Activated B cell treated with CpG ODN at 0.5 μM for 24 hours (primary cell): ENCODE measurements at regions of chr4 and their contacts with region 1.

Region 1: DNA sequence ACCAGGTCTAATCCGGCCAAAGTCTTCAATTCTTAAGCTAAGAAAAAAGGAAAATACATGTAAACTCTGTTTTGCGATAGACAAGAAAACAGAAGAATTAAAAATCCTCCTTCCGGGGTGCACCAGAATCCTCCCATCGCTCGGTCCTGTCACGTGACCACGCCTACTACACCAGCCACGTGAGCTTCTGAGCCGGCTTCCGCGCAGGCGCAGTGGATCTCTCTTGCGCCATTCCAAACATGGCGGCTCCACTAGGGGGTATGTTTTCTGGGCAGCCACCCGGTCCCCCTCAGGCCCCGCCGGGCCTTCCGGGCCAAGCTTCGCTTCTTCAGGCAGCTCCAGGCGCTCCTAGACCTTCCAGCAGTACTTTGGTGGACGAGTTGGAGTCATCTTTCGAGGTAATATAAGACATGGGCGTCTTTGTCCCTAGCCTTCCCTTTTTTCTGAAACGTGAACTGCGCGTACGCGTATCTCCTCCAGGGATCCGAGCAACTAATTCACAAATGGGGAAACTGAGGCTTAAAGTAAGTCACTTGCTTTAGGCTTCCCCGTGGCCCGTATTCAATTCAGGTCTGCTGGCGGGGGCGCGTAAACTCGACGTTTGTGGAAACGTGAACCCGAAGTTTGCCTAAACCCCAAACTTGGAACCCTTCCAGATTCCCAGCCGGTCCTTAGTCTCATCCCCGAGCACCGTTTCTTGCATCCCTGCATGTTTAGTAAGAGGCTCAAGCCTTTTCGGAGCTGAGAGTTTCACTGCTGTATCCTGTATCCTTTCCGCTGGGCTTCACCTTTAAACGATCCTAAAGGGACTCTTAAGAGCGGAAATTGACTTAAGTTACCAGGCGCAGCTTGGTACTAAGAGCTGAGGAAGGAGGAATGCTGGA is at the start of gene MED28:
- DNase-seq: peak; percentile 89
- ATAC-seq: peak; percentile 86
- H3K4me3 Mint-ChIP-seq: peak within 1 kb of the TSS; percentile 97
- H3K27ac Mint-ChIP-seq: peak within 1 kb of the TSS; percentile 95
- H3K4me1 Mint-ChIP-seq: peaks cover 45% of the 10 kb centered on the region
- H3K27me3 Mint-ChIP-seq: no peaks in the 10 kb centered on the region
- CTCF ChIP-seq: no peak
- total RNA-seq, gene MED28: 71.9 and 74.6 TPM in 2 replicates

Region 2: DNA sequence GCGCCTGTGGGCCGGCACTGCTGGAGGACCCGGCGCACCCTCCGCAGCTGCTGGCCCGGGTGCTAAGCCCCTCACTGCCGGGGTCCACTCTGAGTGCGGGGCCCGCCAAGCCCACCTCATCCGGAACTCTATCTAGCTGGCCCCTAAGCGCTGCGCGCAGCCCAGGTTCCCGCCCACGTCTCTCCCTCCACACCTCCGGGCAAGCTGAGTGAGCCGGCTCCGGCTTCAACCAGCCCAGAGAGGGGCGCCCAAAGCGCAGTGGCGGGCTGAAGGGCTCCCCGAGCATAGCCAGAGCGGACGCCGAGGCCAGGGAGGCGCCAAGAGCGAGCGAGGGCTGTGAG is 177.9 kb before region 1 on chr4:
- CTCF ChIA-PET with region 1: no interaction called
- POLR2A ChIA-PET with region 1: no interaction called
- intact Hi-C with region 1: no loop called
- DNase-seq: no peak
- ATAC-seq: no peak
- H3K4me3 Mint-ChIP-seq: no peak overlapping the region
- H3K27ac Mint-ChIP-seq: no peak overlapping the region
- H3K4me1 Mint-ChIP-seq: no peaks in the 10 kb centered on the region
- H3K27me3 Mint-ChIP-seq: no peaks in the 10 kb centered on the region
- CTCF ChIP-seq: no peak

Region 3: DNA sequence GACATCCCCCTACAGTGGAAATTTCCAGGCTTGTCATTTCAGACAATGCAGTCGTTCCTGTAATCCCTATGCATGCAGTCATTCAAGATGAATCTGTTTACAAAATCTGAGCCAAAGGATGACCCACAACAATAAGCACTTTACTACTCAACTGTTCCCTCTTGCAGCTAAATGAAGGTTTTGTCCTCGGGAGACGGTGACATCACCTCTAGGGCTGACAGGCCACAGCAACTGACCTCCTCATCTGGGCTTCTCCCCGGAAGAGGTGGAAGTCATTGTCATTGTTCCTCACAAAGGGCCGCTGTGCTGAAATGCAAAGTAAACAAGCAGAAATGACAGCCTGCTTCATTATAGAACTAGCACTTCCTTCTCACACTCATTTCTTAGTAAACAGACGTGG is 70.5 kb before region 1 on chr4:
- CTCF ChIA-PET with region 1: interaction called, 9 read pairs
- POLR2A ChIA-PET with region 1: interaction called, 17 read pairs
- intact Hi-C with region 1: loop called (anchors 1 kb)
- DNase-seq: no peak
- ATAC-seq: no peak
- H3K4me3 Mint-ChIP-seq: no peak overlapping the region
- H3K27ac Mint-ChIP-seq: no peak overlapping the region
- H3K4me1 Mint-ChIP-seq: peaks cover 3% of the 10 kb centered on the region
- H3K27me3 Mint-ChIP-seq: peaks cover 9% of the 10 kb centered on the region
- CTCF ChIP-seq: no peak

Region 4: DNA sequence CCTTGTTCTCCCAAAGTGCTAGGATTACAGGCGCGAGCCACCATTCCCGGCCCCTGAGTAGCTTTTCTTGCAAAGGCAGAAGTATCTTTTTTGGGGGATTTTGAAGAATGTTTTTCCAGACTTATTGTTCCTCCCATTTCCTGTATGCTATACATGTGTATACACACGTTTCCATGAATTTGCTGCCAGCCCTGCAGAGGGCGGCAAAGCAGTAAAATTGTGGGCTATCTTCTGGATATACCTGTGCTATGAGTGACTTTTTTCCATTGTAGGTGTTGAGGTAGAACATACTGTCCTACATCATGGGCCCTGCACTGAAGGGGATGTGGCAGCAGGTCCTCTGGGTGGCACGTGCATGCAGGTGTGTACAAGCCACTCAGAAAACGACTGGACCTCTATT is 17.1 kb before region 1 on chr4:
- CTCF ChIA-PET with region 1: interaction called, 5 read pairs
- POLR2A ChIA-PET with region 1: interaction called, 42 read pairs
- intact Hi-C with region 1: loop called (anchors 1 kb)
- DNase-seq: no peak
- ATAC-seq: no peak
- H3K4me3 Mint-ChIP-seq: no peak overlapping the region
- H3K27ac Mint-ChIP-seq: no peak overlapping the region
- H3K4me1 Mint-ChIP-seq: peaks cover 32% of the 10 kb centered on the region
- H3K27me3 Mint-ChIP-seq: no peaks in the 10 kb centered on the region
- CTCF ChIP-seq: no peak

Region 5: GRCh38 chr4:17630228-17630627 is 15.6 kb after region 1 on chr4:
- CTCF ChIA-PET with region 1: no interaction called
- POLR2A ChIA-PET with region 1: no interaction called
- intact Hi-C with region 1: no loop called
- DNase-seq: no peak
- ATAC-seq: no peak
- H3K4me3 Mint-ChIP-seq: no peak overlapping the region
- H3K27ac Mint-ChIP-seq: no peak overlapping the region
- H3K4me1 Mint-ChIP-seq: no peaks in the 10 kb centered on the region
- H3K27me3 Mint-ChIP-seq: no peaks in the 10 kb centered on the region
- CTCF ChIP-seq: no peak

Region 6: DNA sequence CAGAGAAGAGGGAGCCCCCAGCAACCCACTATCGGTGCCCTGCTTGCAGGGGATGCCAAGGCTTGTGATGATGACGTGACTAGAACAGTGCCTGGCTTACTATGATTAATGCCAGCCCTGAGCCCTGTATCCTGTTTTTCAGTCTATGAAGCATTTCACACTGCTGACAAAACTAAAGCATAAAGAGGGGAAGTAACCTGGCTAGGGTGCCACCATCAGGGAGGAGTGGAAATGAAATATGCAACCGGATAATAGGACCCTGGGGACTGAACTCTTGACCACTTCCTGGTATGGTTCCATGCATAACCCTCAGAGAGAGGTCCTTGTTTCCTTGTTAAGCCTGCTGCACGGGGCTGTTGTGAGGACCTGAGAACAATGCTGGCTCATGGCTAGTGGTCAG is 50.1 kb after region 1 on chr4:
- CTCF ChIA-PET with region 1: no interaction called
- POLR2A ChIA-PET with region 1: interaction called, 4 read pairs
- intact Hi-C with region 1: loop called (anchors 2 kb)
- DNase-seq: no peak
- ATAC-seq: peak; percentile 89
- H3K4me3 Mint-ChIP-seq: peak overlapping the region; percentile 25
- H3K27ac Mint-ChIP-seq: peak overlapping the region; percentile 12
- H3K4me1 Mint-ChIP-seq: peaks cover 40% of the 10 kb centered on the region
- H3K27me3 Mint-ChIP-seq: peaks cover 4% of the 10 kb centered on the region
- CTCF ChIP-seq: no peak

Region 7: GRCh38 chr4:17810260-17811077 is 195.8 kb after region 1 on chr4 and contains the starts of genes DCAF16 and NCAPG:
- CTCF ChIA-PET with region 1: interaction called, 3 read pairs
- POLR2A ChIA-PET with region 1: interaction called, 23 read pairs
- intact Hi-C with region 1: loop called (anchors 1 kb)
- DNase-seq: peak; percentile 98
- ATAC-seq: peak; percentile 93
- H3K4me3 Mint-ChIP-seq: peak within 1 kb of the TSS; percentile 96
- H3K27ac Mint-ChIP-seq: peak within 1 kb of the TSS; percentile 96
- H3K4me1 Mint-ChIP-seq: peaks cover 57% of the 10 kb centered on the region
- H3K27me3 Mint-ChIP-seq: no peaks in the 10 kb centered on the region
- CTCF ChIP-seq: no peak
- total RNA-seq, gene DCAF16: 42.9 and 57.2 TPM in 2 replicates
- total RNA-seq, gene NCAPG: 1.1 and 1.5 TPM in 2 replicates